CD4-positive, alpha-beta memory T cell (primary cell): ENCODE measurements at regions of chr12 and their contacts with region 1.

Region 1: DNA sequence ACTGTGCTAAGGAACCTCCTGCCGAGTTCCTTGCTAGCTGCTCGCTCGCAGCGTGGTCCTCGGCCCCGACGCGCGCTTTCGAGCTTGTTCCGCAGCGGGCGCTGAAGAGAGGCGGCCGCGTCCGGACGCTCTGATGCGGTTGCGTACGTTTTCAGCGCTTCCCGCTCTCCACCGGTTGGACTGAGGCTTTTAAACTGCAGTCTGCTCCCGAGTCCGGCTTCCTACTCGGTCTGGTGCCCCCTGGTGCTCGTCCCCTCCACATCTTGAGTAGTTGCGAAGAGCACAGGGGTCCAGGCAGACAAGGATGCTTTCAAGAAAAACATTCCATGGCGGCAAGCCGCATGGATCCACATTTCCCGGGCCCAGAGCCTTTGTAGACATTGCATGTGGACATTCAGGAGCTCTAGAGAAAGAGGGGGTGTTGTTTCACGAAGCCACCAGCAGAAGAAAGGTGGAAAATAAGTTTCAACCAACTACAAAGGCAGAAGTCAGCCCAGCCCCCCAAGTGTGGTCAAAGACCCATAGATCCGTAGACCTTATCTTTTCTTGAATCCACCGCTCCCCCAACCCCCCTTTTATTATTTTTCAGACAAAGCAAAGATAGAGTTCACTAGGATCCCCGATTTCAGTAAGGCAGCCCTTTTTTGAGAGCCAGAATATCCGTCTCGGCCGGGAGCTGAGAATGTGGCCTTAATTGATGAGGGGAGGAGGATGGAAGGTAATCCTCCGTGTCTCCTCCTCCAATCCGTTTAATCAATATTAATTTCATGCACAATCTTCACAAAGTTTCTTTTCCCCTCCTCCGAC is 984 bp upstream of the WNK1 start:
- DNase-seq: peak; percentile 77 to 83 (median 78)
- H3K4me3 ChIP-seq: peak overlapping the region; percentile 67 to 96
- H3K4me3 Mint-ChIP-seq: no peak overlapping the region
- H3K27ac ChIP-seq: peak overlapping the region; percentile 89
- H3K27ac Mint-ChIP-seq: no peak overlapping the region
- H3K4me1 ChIP-seq: peaks cover 33% of the 10 kb centered on the region
- H3K4me1 Mint-ChIP-seq: peaks cover 2 to 15% (median 12%) of the 10 kb centered on the region in 4 donors
- H3K27me3 ChIP-seq: no peaks in the 10 kb centered on the region
- H3K27me3 Mint-ChIP-seq: no peaks in the 10 kb centered on the region

Region 2: DNA sequence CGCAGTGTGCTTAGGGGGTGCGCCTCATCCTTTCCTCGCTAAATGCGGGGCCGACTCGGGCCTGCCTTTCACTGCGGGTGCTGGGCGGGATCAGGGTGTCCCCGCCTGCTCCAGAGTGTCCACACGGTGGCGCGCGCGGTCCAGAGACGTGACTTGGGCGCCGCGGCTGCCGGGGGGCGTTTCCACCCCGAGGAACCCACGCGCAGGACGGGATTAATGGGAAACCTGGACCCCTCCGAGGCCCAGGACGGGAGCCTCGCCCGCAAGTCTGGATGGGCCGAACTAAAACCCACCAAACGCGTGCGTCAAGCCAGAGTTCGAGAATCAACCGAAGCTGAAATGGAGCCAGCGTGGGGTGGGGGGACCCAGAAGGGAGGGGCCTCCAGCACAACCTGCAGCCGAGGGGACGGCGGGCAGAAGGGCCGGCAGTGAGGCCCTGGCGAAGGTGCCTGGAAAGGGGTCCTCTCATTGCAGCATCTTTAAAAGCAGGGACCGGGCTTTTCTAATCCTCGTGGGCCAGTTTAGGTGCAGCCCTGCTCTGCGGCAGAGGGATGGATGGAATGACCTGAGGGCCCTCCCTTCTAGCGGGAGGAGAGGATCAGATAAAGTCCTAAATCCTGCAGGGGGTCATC is 181.5 kb before region 1 on chr12:
- CTCF ChIA-PET with region 1: interaction called, 112 read pairs
- POLR2A ChIA-PET with region 1: interaction called, 49 read pairs
- intact Hi-C with region 1: no loop called
- DNase-seq: peak; percentile 79 to 84 (median 82)
- H3K4me3 ChIP-seq: peak overlapping the region; percentile 52 to 65
- H3K4me3 Mint-ChIP-seq: peak overlapping the region; percentile 78 to 90 (median 86)
- H3K27ac ChIP-seq: peak overlapping the region; percentile 47
- H3K27ac Mint-ChIP-seq: peak overlapping the region in 6 of 7 donors; percentile 64 to 88 (median 80)
- H3K4me1 ChIP-seq: peaks cover 43% of the 10 kb centered on the region
- H3K4me1 Mint-ChIP-seq: peaks cover 35 to 54% (median 42%) of the 10 kb centered on the region in 4 donors
- H3K27me3 ChIP-seq: no peaks in the 10 kb centered on the region
- H3K27me3 Mint-ChIP-seq: no peaks in the 10 kb centered on the region

Region 3: GRCh38 chr12:597926-598568 is 153.3 kb before region 1 on chr12:
- CTCF ChIA-PET with region 1: no interaction called
- POLR2A ChIA-PET with region 1: no interaction called
- intact Hi-C with region 1: no loop called
- DNase-seq: no peak
- H3K4me3 ChIP-seq: no peak overlapping the region
- H3K4me3 Mint-ChIP-seq: no peak overlapping the region
- H3K27ac ChIP-seq: no peak overlapping the region
- H3K27ac Mint-ChIP-seq: no peak overlapping the region
- H3K4me1 ChIP-seq: no peaks in the 10 kb centered on the region
- H3K4me1 Mint-ChIP-seq: no peaks in the 10 kb centered on the region
- H3K27me3 ChIP-seq: no peaks in the 10 kb centered on the region
- H3K27me3 Mint-ChIP-seq: no peaks in the 10 kb centered on the region

Region 4: GRCh38 chr12:642633-643474 is 108.5 kb before region 1 on chr12:
- CTCF ChIA-PET with region 1: interaction called, 24 read pairs
- POLR2A ChIA-PET with region 1: interaction called, 132 read pairs
- intact Hi-C with region 1: loop called (anchors 1 kb)
- DNase-seq: peak; percentile 79 to 85 (median 83)
- H3K4me3 ChIP-seq: peak overlapping the region; percentile 25 to 76
- H3K4me3 Mint-ChIP-seq: peak overlapping the region; percentile 90 to 94 (median 91)
- H3K27ac ChIP-seq: peak overlapping the region; percentile 89
- H3K27ac Mint-ChIP-seq: peak overlapping the region; percentile 93 to 99 (median 96)
- H3K4me1 ChIP-seq: peaks cover 63% of the 10 kb centered on the region
- H3K4me1 Mint-ChIP-seq: peaks cover 39 to 71% (median 59%) of the 10 kb centered on the region in 4 donors
- H3K27me3 ChIP-seq: no peaks in the 10 kb centered on the region
- H3K27me3 Mint-ChIP-seq: no peaks in the 10 kb centered on the region

Region 5: DNA sequence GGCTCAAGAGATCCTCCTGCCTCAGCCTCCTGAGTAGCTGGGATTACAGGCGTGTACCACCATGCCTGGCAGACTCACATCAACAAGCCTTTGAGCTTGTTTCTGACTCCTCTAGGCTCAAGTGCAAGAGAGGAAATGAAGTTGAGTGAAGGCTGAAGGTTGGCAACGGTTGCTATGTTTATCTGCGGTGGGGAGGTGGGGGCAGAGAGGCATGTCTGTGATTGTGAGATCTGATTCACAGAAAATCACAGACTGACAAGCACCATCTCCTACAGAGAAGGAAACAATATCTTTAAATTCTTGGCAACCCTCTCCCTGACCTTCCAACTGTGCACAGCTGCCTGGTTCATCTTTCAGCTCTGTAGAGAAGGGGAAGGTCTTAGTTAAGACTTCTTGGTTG is 66.0 kb before region 1 on chr12:
- CTCF ChIA-PET with region 1: interaction called, 41 read pairs
- POLR2A ChIA-PET with region 1: interaction called, 60 read pairs
- intact Hi-C with region 1: loop called (anchors 1 kb)
- DNase-seq: peak; percentile 90 to 97 (median 92)
- H3K4me3 ChIP-seq: no peak overlapping the region
- H3K4me3 Mint-ChIP-seq: peak overlapping the region in 7 of 8 donors; percentile 53 to 81 (median 73)
- H3K27ac ChIP-seq: peak overlapping the region; percentile 81
- H3K27ac Mint-ChIP-seq: peak overlapping the region; percentile 90 to 100 (median 99)
- H3K4me1 ChIP-seq: peaks cover 33% of the 10 kb centered on the region
- H3K4me1 Mint-ChIP-seq: peaks cover 32 to 43% (median 35%) of the 10 kb centered on the region in 4 donors
- H3K27me3 ChIP-seq: no peaks in the 10 kb centered on the region
- H3K27me3 Mint-ChIP-seq: no peaks in the 10 kb centered on the region

Region 6: GRCh38 chr12:774051-774614 is 22.7 kb after region 1 on chr12:
- CTCF ChIA-PET with region 1: interaction called, 16 read pairs
- POLR2A ChIA-PET with region 1: interaction called, 106 read pairs
- intact Hi-C with region 1: loop called (anchors 2 kb)
- DNase-seq: no peak
- H3K4me3 ChIP-seq: no peak overlapping the region
- H3K4me3 Mint-ChIP-seq: peak overlapping the region in 5 of 8 donors; percentile 9 to 61 (median 54)
- H3K27ac ChIP-seq: peak overlapping the region; percentile 12
- H3K27ac Mint-ChIP-seq: peak overlapping the region in 6 of 7 donors; percentile 32 to 88 (median 70)
- H3K4me1 ChIP-seq: peaks cover 96% of the 10 kb centered on the region
- H3K4me1 Mint-ChIP-seq: peaks cover 53 to 86% (median 72%) of the 10 kb centered on the region in 4 donors
- H3K27me3 ChIP-seq: no peaks in the 10 kb centered on the region
- H3K27me3 Mint-ChIP-seq: no peaks in the 10 kb centered on the region

Region 7: GRCh38 chr12:810671-811415 is 59.4 kb after region 1 on chr12:
- CTCF ChIA-PET with region 1: interaction called, 61 read pairs
- POLR2A ChIA-PET with region 1: interaction called, 17 read pairs
- intact Hi-C with region 1: loop called (anchors 1 kb)
- DNase-seq: no peak
- H3K4me3 ChIP-seq: peak overlapping the region in 1 of 2 donors; percentile 9
- H3K4me3 Mint-ChIP-seq: peak overlapping the region in 7 of 8 donors; percentile 21 to 76 (median 62)
- H3K27ac ChIP-seq: peak overlapping the region; percentile 11
- H3K27ac Mint-ChIP-seq: peak overlapping the region; percentile 14 to 86 (median 78)
- H3K4me1 ChIP-seq: peaks cover 86% of the 10 kb centered on the region
- H3K4me1 Mint-ChIP-seq: peaks cover 50 to 81% (median 66%) of the 10 kb centered on the region in 4 donors
- H3K27me3 ChIP-seq: no peaks in the 10 kb centered on the region
- H3K27me3 Mint-ChIP-seq: no peaks in the 10 kb centered on the region

Region 8: GRCh38 chr12:913919-914708 is 162.7 kb after region 1 on chr12:
- CTCF ChIA-PET with region 1: no interaction called
- POLR2A ChIA-PET with region 1: no interaction called
- intact Hi-C with region 1: no loop called
- DNase-seq: no peak
- H3K4me3 ChIP-seq: no peak overlapping the region
- H3K4me3 Mint-ChIP-seq: no peak overlapping the region
- H3K27ac ChIP-seq: no peak overlapping the region
- H3K27ac Mint-ChIP-seq: peak overlapping the region in 6 of 7 donors; percentile 3 to 68 (median 36)
- H3K4me1 ChIP-seq: peaks cover 7% of the 10 kb centered on the region
- H3K4me1 Mint-ChIP-seq: peaks cover 8 to 28% (median 12%) of the 10 kb centered on the region in 4 donors
- H3K27me3 ChIP-seq: no peaks in the 10 kb centered on the region
- H3K27me3 Mint-ChIP-seq: no peaks in the 10 kb centered on the region

Region 9: DNA sequence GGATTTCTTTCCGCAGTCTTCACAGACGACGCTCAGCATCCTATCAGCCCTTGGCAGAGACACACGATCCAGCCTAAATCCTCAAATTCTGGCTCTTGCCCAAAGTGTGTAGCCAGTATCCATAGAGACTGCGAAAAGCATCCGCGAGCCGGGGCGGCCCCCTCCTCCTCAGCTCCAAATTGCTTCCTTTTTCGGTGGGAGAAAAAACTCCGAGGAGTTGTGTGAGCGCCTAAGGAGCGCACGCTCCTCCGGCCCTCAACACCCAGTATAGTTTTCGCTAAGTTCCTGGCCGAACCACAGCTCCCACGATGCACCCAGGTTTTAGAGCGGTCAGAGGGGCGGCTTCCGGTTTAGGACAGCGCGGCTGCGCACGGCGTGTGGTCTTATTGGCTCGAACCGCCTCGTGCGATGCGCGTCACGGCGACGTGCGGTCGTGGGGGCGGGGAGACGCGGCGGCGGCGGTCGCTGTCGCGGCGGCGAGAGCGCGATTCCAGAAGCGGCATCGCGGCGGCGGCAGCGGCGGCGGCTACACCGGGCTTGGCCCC is 939.3 kb after region 1 on chr12 and contains the start of gene ADIPOR2:
- CTCF ChIA-PET with region 1: no interaction called
- POLR2A ChIA-PET with region 1: no interaction called
- intact Hi-C with region 1: loop called (anchors 2 kb)
- DNase-seq: peak; percentile 93 to 95 (median 94)
- H3K4me3 ChIP-seq: peak within 1 kb of the TSS; percentile 70 to 87
- H3K4me3 Mint-ChIP-seq: peak within 1 kb of the TSS; percentile 88 to 97 (median 93)
- H3K27ac ChIP-seq: peak within 1 kb of the TSS; percentile 73
- H3K27ac Mint-ChIP-seq: peak within 1 kb of the TSS; percentile 96 to 99 (median 99)
- H3K4me1 ChIP-seq: peaks cover 27% of the 10 kb centered on the region
- H3K4me1 Mint-ChIP-seq: peaks cover 26 to 53% (median 35%) of the 10 kb centered on the region in 4 donors
- H3K27me3 ChIP-seq: no peaks in the 10 kb centered on the region
- H3K27me3 Mint-ChIP-seq: peaks cover 0 to 1% of the 10 kb centered on the region in 2 donors
- total RNA-seq, gene ADIPOR2: 35.7 to 36.2 TPM